ENCODE measurements at regions of chr1 and their contacts with region 1.

Region 1: DNA sequence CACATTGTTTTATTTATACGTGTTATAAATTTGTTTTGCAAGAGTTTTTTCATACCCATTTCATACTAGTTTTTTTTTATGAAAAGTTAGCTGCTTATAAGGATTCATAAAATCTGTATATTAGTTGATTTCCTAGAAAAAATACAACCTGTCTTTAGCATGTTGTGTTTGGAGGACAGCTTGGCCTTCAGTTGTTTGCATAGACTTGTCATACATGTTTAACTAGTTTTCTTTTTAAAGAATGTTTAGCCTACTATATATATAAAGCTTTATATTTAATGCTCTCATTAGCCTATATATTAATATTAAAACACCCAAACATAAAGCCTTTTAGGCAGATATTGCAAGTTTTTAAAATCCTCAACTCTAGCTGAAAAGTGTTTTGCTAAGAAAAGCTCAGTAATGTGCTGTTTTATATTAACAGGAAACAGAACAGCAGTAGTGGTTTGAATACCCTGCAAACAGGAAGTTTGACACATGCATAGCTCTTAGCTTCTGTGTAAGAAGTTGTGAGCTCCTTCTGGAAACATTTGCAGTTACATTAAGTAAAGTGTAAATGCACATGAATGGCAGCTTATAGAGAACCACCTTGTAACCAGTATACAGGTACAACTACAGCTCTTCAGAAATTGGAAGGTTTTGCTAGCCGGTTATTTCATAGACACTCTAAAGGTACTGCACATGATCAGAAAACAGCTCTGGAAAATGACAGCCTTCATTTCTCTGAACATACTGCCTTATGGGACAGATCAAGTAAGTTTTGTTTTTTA is at the start of gene PRKACB:
- DNase-seq: no peak
- ATAC-seq: no peak
- H3K4me3 ChIP-seq: no peak within 1 kb of the TSS
- H3K27ac ChIP-seq: no peak within 1 kb of the TSS
- H3K4me1 ChIP-seq: no peaks in the 10 kb centered on the region
- H3K27me3 ChIP-seq: no peaks in the 10 kb centered on the region
- total RNA-seq, gene PRKACB: 46.6 to 51.5 TPM

Region 2: GRCh38 chr1:84433258-84434080 is 289.5 kb after region 1 on chr1:
- intact Hi-C with region 1: loop called (anchors 2 to 5 kb)
- DNase-seq: no peak
- ATAC-seq: peak; percentile 90
- H3K4me3 ChIP-seq: no peak overlapping the region
- H3K27ac ChIP-seq: no peak overlapping the region
- H3K4me1 ChIP-seq: no peaks in the 10 kb centered on the region
- H3K27me3 ChIP-seq: no peaks in the 10 kb centered on the region

Region 3: GRCh38 chr1:84611796-84612195 is 467.8 kb after region 1 on chr1:
- intact Hi-C with region 1: loop called in 1 of 2 experiments (anchors 5 kb)
- DNase-seq: no peak
- ATAC-seq: no peak
- H3K4me3 ChIP-seq: no peak overlapping the region
- H3K27ac ChIP-seq: no peak overlapping the region
- H3K4me1 ChIP-seq: no peaks in the 10 kb centered on the region
- H3K27me3 ChIP-seq: no peaks in the 10 kb centered on the region

Region 4: GRCh38 chr1:84620720-84621313 is 476.8 kb after region 1 on chr1:
- intact Hi-C with region 1: loop called in 1 of 2 experiments (anchors 5 kb)
- DNase-seq: peak; percentile 85 to 92
- ATAC-seq: peak; percentile 95
- H3K4me3 ChIP-seq: peak overlapping the region; percentile 2 to 79
- H3K27ac ChIP-seq: no peak overlapping the region
- H3K4me1 ChIP-seq: no peaks in the 10 kb centered on the region
- H3K27me3 ChIP-seq: no peaks in the 10 kb centered on the region

Region 5: GRCh38 chr1:84753516-84754385 is 609.8 kb after region 1 on chr1:
- intact Hi-C with region 1: loop called in 1 of 2 experiments (anchors 10 kb)
- DNase-seq: peak; percentile 85 to 90
- ATAC-seq: peak; percentile 84
- H3K4me3 ChIP-seq: no peak overlapping the region
- H3K27ac ChIP-seq: no peak overlapping the region
- H3K4me1 ChIP-seq: no peaks in the 10 kb centered on the region
- H3K27me3 ChIP-seq: no peaks in the 10 kb centered on the region